PC-3 (cell line): ENCODE measurements at regions of chr7 and their contacts with region 1.

Region 1: DNA sequence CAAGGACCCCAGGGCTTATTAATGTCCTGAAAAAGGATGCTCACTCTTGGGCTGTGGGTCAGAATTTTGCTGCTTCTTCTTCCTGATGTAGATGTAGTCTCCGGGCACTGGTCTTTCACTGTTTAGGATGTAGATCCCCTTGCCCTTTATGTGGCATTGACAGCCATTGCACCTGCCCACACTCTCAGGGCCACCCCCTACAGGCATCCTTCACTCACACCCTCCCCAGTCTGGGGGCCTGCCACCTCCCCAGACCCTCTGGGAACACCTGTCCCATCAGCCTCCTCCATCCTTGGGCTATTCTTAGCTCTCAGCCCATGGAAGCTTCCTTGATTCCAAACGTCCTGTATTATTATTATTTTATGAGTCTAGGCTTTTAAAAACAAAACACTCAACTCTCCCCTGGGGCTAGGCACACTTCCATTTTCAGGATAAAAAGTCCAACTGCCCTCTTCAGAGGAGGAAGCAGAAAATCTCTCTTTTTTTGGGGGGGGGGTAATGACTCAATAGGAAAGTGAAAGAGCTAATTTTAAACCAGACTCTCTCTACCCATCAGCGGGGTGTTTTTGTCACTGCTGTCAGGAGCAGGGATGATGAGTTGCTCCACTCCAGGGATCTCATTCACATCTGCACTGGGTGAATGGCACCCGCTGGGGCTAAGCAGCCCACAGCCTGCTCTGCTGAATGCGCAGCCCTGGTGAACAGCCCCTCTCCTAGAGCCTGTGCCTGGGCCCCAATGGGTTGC is 11.5 kb upstream of the KLRG2 start:
- DNase-seq: no peak
- ATAC-seq: no peak
- H3K4me3 ChIP-seq: no peak overlapping the region
- H3K27ac ChIP-seq: no peak overlapping the region
- H3K4me1 ChIP-seq: no peaks in the 10 kb centered on the region
- H3K27me3 ChIP-seq: no peaks in the 10 kb centered on the region
- CTCF ChIP-seq: no peak

Region 2: GRCh38 chr7:139192014-139192706 is 302.8 kb before region 1 on chr7:
- CTCF ChIA-PET with region 1: interaction called, 15 read pairs
- POLR2A ChIA-PET with region 1: no interaction called
- intact Hi-C with region 1: no loop called
- DNase-seq: peak; percentile 31
- ATAC-seq: peak; percentile 88
- H3K4me3 ChIP-seq: no peak overlapping the region
- H3K27ac ChIP-seq: no peak overlapping the region
- H3K4me1 ChIP-seq: no peaks in the 10 kb centered on the region; the same call in 1 of the 2 replicates
- H3K27me3 ChIP-seq: no peaks in the 10 kb centered on the region
- CTCF ChIP-seq: no peak

Region 3: DNA sequence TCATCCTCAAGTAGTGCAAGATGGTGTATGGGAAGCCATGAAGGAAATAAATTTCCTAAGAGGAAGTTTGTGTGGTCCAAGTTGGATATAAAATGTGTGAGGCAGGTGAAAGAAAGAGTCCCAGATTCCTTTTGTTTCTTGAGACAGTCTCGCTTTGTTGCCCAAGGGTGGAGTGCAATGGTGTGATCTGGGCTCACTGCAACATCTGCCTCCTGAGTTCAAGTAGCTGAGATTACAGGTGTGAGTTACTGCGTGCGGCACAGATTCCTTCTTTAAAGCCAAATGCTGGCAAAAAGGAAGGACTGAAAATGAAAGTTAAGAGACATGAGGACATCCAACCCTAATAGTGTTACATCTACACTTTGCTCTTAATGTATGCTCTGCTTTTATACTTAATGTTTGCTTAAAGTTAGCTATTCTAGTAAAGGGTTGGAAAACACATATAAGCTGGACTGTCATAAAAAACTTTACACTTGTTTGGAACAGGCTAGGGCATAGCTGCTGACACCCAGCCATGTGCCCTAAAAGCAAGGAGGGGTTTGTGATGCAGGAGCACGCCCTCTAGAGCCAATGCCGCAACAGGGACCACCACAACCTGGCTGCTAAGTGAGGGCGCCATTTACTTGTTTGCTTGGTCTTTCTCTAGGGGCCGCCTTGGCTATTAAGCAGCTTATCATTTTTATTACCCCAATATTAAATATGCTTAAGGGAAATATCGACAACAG is 63.0 kb after region 1 on chr7:
- CTCF ChIA-PET with region 1: interaction called, 5 read pairs
- POLR2A ChIA-PET with region 1: no interaction called
- intact Hi-C with region 1: loop called (anchors 10 kb)
- DNase-seq: no peak
- ATAC-seq: peak; percentile 21
- H3K4me3 ChIP-seq: no peak overlapping the region
- H3K27ac ChIP-seq: no peak overlapping the region
- H3K4me1 ChIP-seq: no peaks in the 10 kb centered on the region
- H3K27me3 ChIP-seq: no peaks in the 10 kb centered on the region
- CTCF ChIP-seq: peak; percentile 38